ENCODE measurements at regions of chr9 and their contacts with region 1.

Region 1: DNA sequence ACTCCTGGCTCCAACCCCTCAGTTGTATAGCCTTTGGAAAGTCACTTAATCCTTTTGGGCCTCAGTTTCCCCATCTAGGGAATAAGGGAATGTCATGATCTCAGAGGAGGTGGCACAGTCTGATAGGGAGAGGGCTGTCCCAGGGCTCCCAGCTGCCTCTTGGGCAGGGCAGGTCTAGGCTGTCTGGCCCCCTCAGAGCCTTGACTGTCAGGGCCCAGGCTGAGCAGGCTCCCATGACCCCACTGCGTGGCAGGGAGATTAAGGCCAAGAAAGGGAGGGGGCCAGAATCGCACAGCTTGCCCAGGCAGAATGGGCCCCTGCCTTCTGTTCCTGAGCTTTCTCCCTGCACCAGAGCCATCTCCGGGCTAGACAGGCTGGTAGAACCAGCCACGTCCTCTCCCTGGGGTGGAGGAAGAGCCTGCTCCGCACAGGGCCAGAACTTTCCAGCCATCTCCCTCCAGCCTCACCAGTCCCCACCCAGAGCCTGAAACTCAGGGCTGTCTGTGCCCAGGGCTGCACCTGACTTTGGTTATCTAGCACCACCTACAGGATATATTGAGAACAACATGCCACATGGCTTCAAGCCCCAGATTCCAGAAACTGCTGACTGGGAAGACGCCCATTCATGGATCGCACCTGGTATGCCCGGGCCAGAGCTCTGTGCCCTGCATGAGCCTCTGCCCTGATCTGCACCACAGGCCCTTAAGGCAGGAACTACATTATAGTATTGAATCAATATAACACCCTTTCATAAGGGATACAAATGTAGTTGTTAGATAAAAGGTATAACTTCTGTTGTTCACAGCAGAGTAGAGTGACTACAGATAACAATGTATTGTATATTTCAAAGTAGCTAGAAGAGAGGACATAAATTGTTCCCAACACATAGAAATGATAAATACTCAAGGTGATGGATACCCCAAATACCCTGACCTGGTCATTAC is 32.0 kb downstream of the NAIF1 start:
- DNase-seq: peak; percentile 80
- ATAC-seq: peak; percentile 70
- H3K4me3 Mint-ChIP-seq: no peak overlapping the region
- H3K27ac Mint-ChIP-seq: peak overlapping the region; percentile 77
- H3K4me1 Mint-ChIP-seq: peaks cover 42% of the 10 kb centered on the region
- H3K27me3 Mint-ChIP-seq: no peaks in the 10 kb centered on the region

Region 2: GRCh38 chr9:127930231-127931091 is 104.6 kb before region 1 on chr9 and contains the start of gene PIP5KL1:
- CTCF ChIA-PET with region 1: interaction called, 21 read pairs
- POLR2A ChIA-PET with region 1: no interaction called
- DNase-seq: peak; percentile 77
- ATAC-seq: peak; percentile 78
- H3K4me3 Mint-ChIP-seq: peak within 1 kb of the TSS; percentile 64
- H3K27ac Mint-ChIP-seq: no peak within 1 kb of the TSS
- H3K4me1 Mint-ChIP-seq: peaks cover 66% of the 10 kb centered on the region
- H3K27me3 Mint-ChIP-seq: peaks cover 15% of the 10 kb centered on the region
- total RNA-seq, gene PIP5KL1: 2.6 to 2.7 TPM

Region 3: GRCh38 chr9:127955294-127956035 is 79.6 kb before region 1 on chr9:
- CTCF ChIA-PET with region 1: interaction called, 151 read pairs
- POLR2A ChIA-PET with region 1: interaction called, 12 read pairs
- DNase-seq: peak; percentile 83
- ATAC-seq: peak; percentile 96
- H3K4me3 Mint-ChIP-seq: peak overlapping the region; percentile 21
- H3K27ac Mint-ChIP-seq: peak overlapping the region; percentile 70
- H3K4me1 Mint-ChIP-seq: peaks cover 89% of the 10 kb centered on the region
- H3K27me3 Mint-ChIP-seq: no peaks in the 10 kb centered on the region

Region 4: GRCh38 chr9:127980706-127981558 is 54.2 kb before region 1 on chr9 and contains the start of gene EEIG1:
- CTCF ChIA-PET with region 1: interaction called, 158 read pairs
- POLR2A ChIA-PET with region 1: interaction called, 183 read pairs
- DNase-seq: peak; percentile 97
- ATAC-seq: peak; percentile 93
- H3K4me3 Mint-ChIP-seq: peak within 1 kb of the TSS; percentile 97
- H3K27ac Mint-ChIP-seq: peak within 1 kb of the TSS; percentile 92
- H3K4me1 Mint-ChIP-seq: peaks cover 45% of the 10 kb centered on the region
- H3K27me3 Mint-ChIP-seq: no peaks in the 10 kb centered on the region
- total RNA-seq, gene EEIG1: 227 to 232 TPM

Region 5: DNA sequence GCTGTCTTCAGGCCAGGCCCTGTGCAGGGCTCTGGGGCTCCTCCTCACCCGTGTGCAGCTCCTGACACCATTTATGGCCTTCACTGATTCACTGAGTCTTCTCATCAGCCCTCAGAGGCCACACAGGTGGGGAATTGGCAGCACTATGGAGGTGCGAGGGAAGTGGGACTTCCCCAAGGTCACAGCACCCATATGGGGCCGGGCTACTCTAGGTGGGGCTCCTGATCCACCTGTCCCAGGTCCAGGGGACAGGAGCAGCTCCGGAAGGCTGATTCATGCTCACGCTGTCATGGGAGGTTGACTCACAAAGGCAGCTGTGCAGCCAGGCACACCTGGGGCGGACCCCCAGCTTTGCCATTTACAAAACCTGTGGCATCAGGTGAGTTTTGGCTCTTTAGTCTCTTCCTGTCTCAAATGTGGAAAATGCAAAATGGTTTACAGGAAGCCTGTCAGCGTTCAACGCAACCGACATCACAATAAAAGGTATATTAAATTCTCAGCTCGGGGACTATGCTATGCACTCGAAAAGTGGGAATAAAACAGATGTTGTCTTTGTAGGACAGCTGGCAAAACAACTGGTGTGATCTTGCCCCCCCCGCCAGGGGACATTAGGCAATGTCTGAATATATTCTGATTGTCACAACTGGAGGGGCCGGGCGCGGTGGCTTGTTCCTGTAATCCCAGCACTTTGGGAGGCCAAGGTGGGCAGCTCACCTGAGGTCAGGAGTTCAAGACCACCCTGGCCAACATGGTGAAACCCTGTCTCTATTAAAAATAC is 17.0 kb after region 1 on chr9:
- CTCF ChIA-PET with region 1: interaction called, 14 read pairs
- POLR2A ChIA-PET with region 1: no interaction called
- DNase-seq: no peak
- ATAC-seq: no peak
- H3K4me3 Mint-ChIP-seq: no peak overlapping the region
- H3K27ac Mint-ChIP-seq: no peak overlapping the region
- H3K4me1 Mint-ChIP-seq: peaks cover 7% of the 10 kb centered on the region
- H3K27me3 Mint-ChIP-seq: no peaks in the 10 kb centered on the region

Region 6: DNA sequence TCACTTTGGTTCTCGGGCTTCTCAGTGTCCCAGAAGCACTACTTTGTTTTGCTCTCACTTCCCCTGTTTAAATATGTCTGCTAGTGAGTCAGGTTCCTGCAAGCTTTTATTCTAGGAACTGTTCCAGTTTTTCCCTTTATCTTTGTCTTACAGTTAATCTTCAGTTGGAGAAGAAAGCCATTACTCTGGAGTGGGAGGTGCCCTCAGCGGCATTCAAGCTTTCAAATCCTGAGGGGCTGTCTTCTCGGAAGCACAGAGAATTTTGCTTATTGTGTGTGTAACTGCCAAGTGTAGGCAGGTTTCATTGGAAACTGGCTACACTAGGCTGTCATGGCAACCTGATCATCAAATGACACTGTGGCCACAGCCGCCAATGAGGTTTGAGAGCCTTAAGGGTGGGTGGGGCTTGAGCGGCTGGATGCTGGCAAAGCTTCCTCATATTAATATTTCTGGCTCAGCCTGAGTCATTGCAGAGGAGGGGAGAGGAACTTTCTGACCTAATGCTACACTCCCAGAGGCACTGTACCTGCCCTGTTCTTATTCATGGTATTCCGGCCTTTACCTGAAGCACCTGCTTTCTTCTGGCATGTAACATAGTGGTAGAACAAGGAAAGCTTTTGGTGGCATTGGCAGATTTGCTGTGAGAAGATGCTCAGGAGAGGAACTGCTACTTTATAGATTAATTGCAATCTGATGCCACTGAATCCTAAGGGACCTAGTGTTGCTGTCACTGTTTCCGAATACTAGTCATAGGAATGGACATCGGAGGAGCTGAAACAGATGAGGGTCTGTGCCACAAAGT is 59.3 kb after region 1 on chr9:
- CTCF ChIA-PET with region 1: interaction called, 25 read pairs
- POLR2A ChIA-PET with region 1: no interaction called
- DNase-seq: peak; percentile 73
- ATAC-seq: peak; percentile 89
- H3K4me3 Mint-ChIP-seq: no peak overlapping the region
- H3K27ac Mint-ChIP-seq: peak overlapping the region; percentile 79
- H3K4me1 Mint-ChIP-seq: peaks cover 75% of the 10 kb centered on the region
- H3K27me3 Mint-ChIP-seq: no peaks in the 10 kb centered on the region

Measured in activated CD8-positive, alpha-beta T cell treated with anti-CD3 and anti-CD28 coated beads, Interleukin-2, amount 10 ng/mL, durations not matched to agents 7 days and 5 days (primary cell).